BJ (cell line): ENCODE measurements at regions of chr5 and their contacts with region 1.

Region 1: DNA sequence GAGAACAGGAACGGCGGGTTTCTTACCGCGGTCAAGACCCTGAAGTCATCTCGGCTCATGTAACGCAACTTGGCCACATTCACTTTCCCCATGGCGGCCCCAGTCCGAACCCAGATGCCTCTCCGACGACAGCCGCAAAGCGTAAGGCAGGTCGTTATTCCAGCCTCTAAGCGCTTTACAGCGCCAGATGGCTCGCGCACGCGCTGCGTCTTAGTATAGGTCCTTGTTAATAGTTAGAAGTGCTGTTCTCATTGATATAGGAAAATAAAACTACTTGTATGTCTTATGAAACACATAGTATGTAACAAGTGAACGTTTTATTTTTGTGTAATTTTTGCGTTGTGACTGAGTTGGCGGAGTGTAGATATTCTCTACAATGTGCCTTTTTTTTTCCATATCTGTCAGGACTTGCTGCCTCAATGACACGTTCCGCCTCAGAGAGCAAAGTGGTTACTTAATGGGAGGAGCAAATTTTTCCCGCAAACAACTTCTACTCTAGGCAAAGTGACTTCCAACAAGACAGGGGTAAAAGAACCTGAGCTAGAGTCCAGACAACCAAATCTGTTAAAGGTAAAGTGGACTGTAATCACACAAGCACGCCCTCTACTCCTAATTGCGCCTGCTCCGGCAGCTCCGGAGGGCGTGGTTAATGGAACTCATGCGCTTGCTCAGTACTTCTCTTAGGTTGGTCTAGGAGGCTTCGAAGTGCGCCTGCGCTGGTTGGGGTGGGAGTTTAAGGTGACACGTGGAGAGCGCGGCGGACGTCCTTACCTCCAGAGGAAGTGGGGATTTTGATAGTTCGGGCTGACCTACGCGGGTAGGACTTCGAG is at the start of gene RIOK2:
- DNase-seq: peak; percentile 85
- H3K4me3 ChIP-seq: peak within 1 kb of the TSS; percentile 77
- H3K27me3 ChIP-seq: no peaks in the 10 kb centered on the region
- CTCF ChIP-seq: no peak
- polyA plus RNA-seq, gene RIOK2: 5.7 and 17.3 TPM in 2 replicates

Region 2: GRCh38 chr5:96874631-96875030 is 308.7 kb before region 1 on chr5:
- CTCF ChIA-PET with region 1: no interaction called
- POLR2A ChIA-PET with region 1: interaction called, 10 read pairs
- DNase-seq: no peak
- H3K4me3 ChIP-seq: no peak overlapping the region
- H3K27me3 ChIP-seq: peaks cover 2% of the 10 kb centered on the region; the same call in 1 of the 2 replicates
- CTCF ChIP-seq: no peak